ENCODE measurements at regions of chr1 and their contacts with region 1.

Region 1: DNA sequence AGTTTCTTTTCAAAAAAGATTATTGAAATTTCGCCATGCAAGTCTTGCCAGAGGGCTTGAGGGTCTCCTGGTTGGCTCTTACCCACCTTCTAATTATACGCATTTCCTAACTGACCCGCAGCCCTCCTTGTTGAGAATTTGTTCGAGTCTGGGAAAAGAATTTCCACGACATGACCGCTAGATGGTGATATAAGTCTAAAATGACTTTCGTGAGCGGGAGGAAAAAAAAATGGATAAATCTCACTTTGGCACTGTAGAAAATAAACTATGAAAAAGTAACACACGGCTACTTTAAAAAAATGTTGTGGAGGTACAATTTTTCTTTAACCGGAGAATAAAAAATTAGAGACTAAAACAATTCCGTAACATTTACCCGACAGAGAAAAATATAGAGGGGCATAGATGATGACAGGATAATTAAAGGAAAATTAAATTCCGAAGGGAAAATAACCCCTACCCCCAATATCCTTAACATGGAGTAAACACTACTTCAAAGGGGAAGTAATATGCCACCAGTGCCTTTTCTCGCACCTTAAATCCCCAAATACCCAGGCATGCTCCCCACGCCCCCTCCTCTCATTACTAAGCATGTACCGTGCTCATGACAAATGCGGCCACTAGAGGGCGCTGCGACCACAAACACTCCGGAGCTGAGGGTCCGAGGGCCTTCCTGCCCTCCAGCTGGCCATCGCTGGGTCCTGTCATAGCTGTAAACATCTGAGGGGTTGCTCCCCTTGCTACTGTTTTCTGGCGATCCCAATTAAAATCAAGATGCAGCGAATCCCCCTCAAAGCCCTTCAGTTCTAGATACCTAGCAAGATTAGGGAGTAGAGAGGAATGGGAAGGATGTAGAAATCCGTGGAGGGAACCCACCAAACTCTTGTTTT is 266.9 kb downstream of the ASTN1 start:
- DNase-seq: no peak

Region 2: DNA sequence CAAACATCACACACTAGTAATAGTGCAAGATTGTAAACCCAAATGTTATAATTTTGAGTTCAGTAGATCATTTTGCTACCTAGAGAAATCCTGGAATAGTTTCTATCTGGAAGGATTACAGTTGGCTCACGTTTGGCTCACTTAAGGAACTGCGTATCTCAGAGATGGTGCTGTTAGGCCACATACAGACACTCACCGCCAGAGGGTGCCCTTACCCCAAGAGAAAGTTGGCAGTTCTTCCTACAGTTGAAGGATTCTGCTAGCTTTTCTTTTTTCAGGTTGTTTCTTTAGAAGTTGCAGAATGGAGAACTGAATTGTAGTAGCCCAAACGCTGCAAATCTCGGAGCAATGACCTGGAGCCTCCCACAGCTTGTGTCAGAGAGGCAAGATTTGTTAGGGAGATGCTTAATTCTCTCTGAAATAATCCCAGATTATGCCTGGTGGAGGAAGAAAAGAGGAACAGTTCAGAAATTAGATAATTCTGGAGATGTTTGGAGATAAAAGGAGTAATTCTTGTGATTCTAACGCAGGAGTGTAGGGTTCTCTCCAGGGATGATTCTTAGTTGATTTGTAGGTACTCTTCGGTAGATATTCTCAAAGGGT is 522.5 kb before region 1 on chr1:
- intact Hi-C with region 1: no loop called
- DNase-seq: peak; percentile 77

Region 3: GRCh38 chr1:176919386-176920378 is 22.1 kb after region 1 on chr1:
- intact Hi-C with region 1: no loop called
- DNase-seq: no peak

Region 4: DNA sequence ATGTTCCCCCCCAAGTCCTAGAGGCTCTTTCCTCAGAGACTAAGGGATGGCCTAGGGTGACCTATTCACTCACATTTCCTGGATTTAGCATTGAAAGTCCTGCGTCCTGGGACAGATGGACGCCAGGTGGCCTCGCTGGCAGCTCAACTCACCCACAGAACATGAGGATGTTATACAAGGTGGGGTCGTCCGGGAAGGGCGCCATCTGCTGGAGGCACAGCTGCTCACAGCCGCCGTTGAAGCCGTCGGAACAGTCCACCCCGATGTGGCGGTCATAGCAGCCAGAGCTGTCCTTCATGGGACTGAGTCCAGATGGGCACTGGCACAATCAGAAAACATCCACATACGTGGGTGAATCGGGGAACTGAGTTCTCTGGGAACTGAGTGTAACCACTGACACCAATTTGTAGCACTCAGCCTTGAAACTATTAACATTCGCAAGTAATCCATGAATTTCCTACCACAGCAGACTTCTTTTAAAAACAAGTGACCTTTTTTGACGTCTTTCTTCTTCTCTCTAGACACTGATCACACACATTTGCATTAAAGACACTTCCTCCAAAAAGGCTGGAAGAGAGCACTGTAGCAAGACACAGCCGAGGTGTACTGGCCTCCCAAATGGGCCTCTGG is 51.6 kb after region 1 on chr1:
- intact Hi-C with region 1: loop called (anchors 5 kb)
- DNase-seq: no peak

Region 5: GRCh38 chr1:177181631-177182291 is 284.2 kb after region 1 on chr1:
- intact Hi-C with region 1: loop called (anchors 1 kb)
- DNase-seq: no peak

Region 6: GRCh38 chr1:177355595-177355994 is 458.0 kb after region 1 on chr1:
- intact Hi-C with region 1: loop called (anchors 10 kb)
- DNase-seq: no peak

Region 7: GRCh38 chr1:177780096-177780700 is 882.6 kb after region 1 on chr1:
- intact Hi-C with region 1: loop called (anchors 5 kb)
- DNase-seq: no peak

Region 8: GRCh38 chr1:177948336-177948972 is 1050.9 kb after region 1 on chr1:
- intact Hi-C with region 1: loop called (anchors 2 kb)
- DNase-seq: no peak